Ovary (tissue), 10 donors: ENCODE measurements at regions of chr22 and their contacts with region 1.

Region 1: DNA sequence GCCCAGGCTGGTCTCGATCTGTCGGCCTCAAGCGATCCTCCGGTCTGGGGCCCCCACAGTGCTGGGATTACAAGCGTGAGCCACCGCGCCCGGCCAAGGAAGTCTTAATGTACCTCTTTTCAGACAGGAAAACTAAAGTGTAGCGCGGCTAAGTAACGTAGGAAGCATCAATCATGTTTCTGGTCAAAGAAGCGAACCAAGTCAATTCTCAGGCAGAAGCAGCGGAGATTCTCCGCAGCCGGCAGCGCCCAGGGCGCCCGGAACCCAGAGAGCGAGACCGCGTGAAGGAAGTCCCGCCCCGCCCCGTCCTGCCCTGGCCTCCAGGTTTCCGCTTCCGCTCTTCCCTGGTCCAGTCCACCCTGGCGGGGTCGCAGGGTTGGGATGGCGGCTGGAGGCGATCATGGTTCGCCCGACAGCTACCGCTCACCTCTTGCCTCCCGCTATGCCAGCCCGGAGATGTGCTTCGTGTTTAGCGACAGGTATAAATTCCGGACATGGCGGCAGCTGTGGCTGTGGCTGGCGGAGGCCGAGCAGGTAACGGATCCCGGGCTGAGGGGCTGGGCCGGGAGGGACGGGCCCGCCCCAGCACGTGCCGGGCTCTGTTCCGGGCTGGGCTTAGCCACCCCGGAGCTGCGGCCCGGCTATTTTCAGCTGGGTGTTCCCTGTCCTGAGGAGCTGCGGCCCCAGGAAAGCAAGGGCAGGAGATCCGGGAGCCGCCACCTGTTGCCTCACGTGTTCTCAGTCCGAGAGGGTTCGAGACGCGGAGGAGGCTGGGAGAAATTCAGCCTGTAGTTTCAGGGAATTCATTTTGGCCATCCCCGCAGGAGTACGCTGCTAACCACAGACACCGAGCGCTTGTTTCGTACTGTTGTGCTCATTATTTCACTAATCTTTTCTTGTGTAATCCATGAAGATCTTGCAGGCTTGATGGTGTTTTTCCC is at the start of gene ADSL:
- DNase-seq: peak; percentile 84 to 92 (median 85)
- H3K4me3 ChIP-seq: peak within 1 kb of the TSS; percentile 83
- H3K27ac ChIP-seq: peak within 1 kb of the TSS; percentile 32 to 74
- H3K4me1 ChIP-seq: peaks cover 4% of the 10 kb centered on the region
- H3K27me3 ChIP-seq: no peaks in the 10 kb centered on the region
- CTCF ChIP-seq: peak in 1 of 3 donors; percentile 43
- EP300 ChIP-seq: no peak
- POLR2A ChIP-seq: peak; percentile 88
- total RNA-seq, gene ADSL: 45.1 to 63.5 (median 49.7) TPM

Region 2: DNA sequence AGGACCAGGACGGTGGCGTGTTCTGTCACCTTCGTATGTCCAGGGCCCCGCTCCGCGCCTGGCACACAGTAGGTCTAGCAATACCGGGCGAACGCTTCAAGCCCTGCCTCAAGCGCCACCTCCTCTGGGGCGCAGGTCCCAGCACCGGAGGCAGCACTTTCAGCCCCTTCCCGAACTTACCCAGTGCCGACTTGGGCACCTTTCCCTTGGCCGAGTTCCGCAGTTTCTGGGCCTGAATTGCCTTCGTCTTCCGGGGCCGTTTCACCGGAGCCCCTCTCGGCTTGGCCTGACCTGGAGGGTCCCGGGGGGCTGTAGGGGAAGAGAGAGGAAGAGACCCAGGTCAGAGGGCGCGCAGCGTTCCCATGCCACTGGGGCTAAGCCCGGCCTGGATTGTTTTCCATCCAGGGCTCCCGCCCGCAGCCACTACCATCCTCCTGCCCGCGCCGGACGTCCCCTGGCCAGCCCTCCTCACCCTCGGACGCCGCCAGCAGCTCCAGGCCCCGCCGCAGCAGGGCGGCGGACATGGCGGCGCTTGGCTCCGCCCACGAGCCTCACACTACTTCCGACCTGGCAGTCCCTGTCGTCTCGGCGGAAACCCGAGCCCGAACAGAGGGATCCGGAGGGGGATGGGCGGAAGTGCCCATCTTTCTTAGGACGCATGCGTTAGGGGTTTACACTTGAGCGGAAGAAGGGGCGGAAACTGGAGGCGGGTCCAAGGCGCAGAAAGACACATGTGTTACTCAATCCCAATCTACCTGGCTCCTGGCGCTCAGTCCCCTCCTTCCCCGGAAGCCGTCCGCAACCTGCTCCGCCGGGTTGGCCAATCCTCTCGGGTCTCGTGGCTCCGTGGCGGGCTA is 814.0 kb before region 1 on chr22 and contains the start of gene RPS19BP1:
- intact Hi-C with region 1: loop called in 1 of 4 experiments (anchors 5 kb)
- DNase-seq: peak; percentile 99 to 100 (median 100)
- H3K4me3 ChIP-seq: peak within 1 kb of the TSS; percentile 68
- H3K27ac ChIP-seq: peak within 1 kb of the TSS; percentile 38 to 75
- H3K4me1 ChIP-seq: peaks cover 14% of the 10 kb centered on the region
- H3K27me3 ChIP-seq: no peaks in the 10 kb centered on the region
- CTCF ChIP-seq: no peak
- EP300 ChIP-seq: no peak
- POLR2A ChIP-seq: peak; percentile 68
- total RNA-seq, gene RPS19BP1: 41.9 to 117 (median 44.2) TPM

Region 3: DNA sequence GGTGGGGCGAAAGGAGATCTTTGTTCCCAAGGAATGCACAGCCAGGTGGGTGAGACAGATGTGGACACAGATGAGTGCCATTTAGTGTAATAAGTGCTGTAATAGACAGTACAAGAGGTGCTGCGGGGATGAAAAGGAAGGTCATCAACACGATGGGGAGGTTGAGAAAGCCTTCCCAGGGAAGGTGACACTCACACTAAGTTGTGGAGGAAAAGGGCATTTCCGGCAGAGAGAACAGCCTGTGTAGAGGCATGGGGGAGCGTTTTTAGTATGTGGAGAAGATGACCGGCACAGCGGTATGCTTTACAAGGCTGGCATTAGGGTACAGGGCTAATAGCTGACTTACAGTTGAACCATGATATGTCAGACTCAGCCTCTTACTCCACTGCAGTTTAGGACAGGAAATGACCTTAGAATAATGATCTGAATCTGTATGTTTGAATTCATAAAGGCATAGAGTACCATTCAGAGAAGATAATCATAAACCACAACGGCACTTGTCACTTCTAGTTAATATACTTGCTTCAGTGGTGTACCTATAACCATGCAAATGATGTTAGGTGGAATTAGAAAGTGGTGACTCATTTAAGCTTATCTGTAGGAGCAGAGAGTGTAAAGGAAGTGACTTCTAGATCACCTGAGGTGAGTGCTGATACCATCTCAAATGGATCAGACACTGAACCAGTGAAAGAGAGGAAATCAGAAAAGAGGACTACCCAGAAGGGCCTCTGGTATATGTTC is 291.1 kb before region 1 on chr22:
- intact Hi-C with region 1: loop called in 1 of 4 experiments (anchors 10 kb)
- DNase-seq: no peak
- H3K4me3 ChIP-seq: no peak overlapping the region
- H3K27ac ChIP-seq: no peak overlapping the region
- H3K4me1 ChIP-seq: peaks cover 11% of the 10 kb centered on the region
- H3K27me3 ChIP-seq: no peaks in the 10 kb centered on the region
- CTCF ChIP-seq: no peak
- EP300 ChIP-seq: no peak
- POLR2A ChIP-seq: no peak